Dorsolateral prefrontal cortex (tissue), 120 donors: ENCODE measurements at regions of chr6 and their contacts with region 1.

Region 1: DNA sequence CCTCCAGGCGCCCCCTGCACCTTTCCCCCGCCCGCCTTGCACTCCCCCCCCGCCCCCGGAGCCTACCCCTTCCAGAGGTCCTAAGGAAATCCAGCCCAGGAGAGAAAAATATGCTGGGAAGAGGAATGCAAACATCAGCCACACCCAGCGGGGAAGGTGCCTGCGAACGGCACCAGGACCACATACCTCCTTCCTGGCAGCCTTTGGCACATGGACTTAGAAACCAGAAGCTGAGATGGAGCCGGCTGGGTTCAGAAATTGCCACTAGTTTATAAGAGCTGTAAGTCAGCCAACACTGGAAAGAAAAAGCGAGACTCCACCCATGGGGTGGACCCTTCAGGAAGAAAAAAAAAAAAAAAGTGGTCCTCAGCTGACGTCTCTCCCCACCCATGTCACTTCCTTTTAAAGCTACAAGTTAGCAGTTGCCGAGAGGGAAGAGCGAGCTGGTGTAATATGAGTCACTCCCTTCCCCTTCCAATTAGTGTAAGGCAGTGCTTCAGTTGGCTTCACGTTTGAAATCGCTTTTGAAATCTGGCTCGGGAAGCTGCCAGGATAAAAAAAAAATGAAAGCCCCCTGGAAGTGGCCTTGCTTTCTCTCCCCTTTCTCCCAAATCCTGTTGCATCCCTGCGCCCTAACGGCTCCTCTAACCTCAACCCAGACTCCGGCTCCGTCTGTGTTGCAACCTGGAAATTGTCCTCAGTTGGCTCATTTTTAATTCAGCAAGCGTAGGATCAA is at the start of gene AGPAT4:
- DNase-seq: peak in 8 of 10 donors; percentile 45 to 79 (median 54)
- H3K4me3 ChIP-seq: peak within 1 kb of the TSS; percentile 60 to 90 (median 75)
- H3K27ac ChIP-seq: peak within 1 kb of the TSS; percentile 39 to 93 (median 87)
- H3K27me3 ChIP-seq: no peaks in the 10 kb centered on the region
- CTCF ChIP-seq: peak in 5 of 56 donors; percentile 4 to 22 (median 7)
- total RNA-seq, gene AGPAT4: 34.6 to 138 (median 62.5) TPM

Region 2: DNA sequence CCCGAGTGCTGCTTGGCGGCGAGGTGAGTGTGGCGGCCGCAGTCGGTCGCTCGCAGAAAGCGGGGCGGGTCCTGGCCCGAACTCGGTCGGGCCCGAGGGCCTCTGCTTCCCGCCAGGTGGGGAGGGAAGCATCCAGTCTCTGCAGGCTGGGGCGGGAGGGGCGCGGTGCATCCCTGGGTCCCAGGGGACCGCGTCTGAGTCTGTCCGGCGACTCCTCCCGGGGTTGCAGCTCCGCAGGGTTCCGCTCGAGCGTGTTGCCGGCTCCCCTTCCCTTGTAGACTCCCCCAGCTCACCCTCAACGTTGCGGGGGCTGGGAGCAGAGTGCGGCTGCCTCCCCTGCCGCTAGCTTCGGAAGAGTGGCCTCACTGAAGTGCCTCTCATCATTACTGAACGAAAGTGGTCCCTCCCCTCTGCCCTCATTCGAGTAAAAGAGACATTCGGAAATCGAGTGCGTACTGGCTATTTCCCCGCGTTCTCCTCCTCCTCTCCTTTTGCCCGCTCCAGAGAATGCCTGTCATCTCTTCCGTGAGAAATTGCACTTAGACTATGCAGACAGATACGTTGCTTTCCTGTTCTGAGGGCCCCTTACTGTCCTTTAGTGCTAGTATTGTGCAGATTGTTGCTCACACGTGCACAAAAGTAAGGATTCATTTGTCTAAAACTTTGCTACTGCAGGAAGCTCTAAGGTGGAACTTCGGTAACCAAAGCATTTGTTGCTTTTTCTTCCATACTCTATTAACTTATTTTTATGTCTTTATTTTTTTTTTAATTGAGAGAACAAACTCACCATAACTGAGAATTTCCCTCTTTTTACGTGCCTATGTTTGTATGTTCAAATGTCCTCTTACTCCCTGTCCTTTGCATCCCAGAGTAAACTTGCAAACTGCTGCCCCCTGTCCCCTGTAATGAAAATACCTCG is 281.6 kb before region 1 on chr6:
- intact Hi-C with region 1: loop called in 1 of 2 experiments (anchors 10 kb)
- DNase-seq: peak in 9 of 10 donors; percentile 29 to 61 (median 46)
- H3K4me3 ChIP-seq: peak overlapping the region; percentile 57 to 98 (median 92)
- H3K27ac ChIP-seq: peak overlapping the region; percentile 73 to 98 (median 93)
- H3K27me3 ChIP-seq: no peaks in the 10 kb centered on the region
- CTCF ChIP-seq: peak in 54 of 56 donors; percentile 26 to 72 (median 56)

Region 3: DNA sequence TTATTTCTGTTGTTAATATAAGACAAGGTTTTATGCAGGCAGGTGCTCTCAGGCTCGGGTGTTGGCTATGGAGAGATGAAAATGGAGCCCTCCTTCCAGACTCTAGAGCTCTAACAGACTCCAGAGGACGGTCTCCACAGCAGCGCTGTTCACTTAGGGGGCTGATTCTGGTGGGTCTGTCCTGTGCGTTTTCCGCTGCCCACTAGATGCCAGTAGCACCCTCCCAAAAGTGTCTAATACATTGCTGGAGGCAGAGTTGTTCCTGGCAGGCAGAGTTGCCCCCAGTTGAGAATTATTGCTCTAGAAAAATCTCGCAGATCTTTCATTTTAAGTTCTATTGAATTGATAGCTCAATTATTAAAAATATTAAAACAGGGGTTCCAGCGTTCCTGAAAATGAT is 172.4 kb before region 1 on chr6:
- intact Hi-C with region 1: loop called in 1 of 2 experiments (anchors 10 kb)
- DNase-seq: peak in 2 of 10 donors; percentile 18 to 50
- H3K4me3 ChIP-seq: no peak overlapping the region
- H3K27ac ChIP-seq: peak overlapping the region in 9 of 59 donors; percentile 3 to 31 (median 11)
- H3K27me3 ChIP-seq: no peaks in the 10 kb centered on the region
- CTCF ChIP-seq: peak in 53 of 56 donors; percentile 10 to 71 (median 49)

Region 4: DNA sequence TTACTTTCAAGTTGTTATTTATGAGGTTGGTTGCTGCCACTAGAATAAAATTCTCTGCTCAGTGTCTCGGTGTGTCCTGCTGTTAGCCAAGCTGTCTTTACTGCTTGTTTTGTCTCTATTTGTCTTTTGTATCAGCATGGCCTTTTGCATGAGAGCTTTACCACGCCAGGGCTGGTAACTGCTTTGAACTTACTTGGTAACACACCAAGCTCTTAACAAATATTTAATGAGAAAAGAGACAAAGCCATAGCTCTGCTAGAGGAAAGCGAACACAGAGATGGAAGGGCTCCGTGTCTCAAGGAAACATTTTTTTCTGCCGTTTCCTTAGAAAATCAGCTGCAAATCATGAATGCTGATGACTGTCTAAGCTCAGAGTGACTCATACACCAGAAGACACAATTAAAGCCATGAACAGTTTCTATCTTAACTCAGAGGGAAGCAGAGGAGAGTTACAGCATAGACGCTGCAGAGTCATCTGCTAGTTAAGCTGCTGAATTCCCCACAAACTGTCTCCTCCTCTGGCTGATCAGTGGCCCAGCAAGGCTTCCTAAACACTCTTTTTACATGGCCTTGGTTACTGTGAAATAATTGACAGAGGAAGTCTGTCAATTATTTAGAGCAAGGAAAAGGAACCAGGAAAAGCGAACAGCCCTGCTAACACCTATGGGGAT is 44.9 kb before region 1 on chr6:
- intact Hi-C with region 1: loop called (anchors 5 kb)
- DNase-seq: peak in 1 of 10 donors; percentile 47
- H3K4me3 ChIP-seq: peak overlapping the region in 50 of 59 donors; percentile 3 to 53 (median 21)
- H3K27ac ChIP-seq: peak overlapping the region; percentile 22 to 93 (median 85)
- H3K27me3 ChIP-seq: no peaks in the 10 kb centered on the region
- CTCF ChIP-seq: peak in 3 of 56 donors; percentile 9 to 13 (median 11)

Region 5: GRCh38 chr6:161292145-161292544 is 18.2 kb after region 1 on chr6:
- intact Hi-C with region 1: no loop called
- DNase-seq: no peak
- H3K4me3 ChIP-seq: no peak overlapping the region
- H3K27ac ChIP-seq: no peak overlapping the region
- H3K27me3 ChIP-seq: no peaks in the 10 kb centered on the region
- CTCF ChIP-seq: no peak

Region 6: DNA sequence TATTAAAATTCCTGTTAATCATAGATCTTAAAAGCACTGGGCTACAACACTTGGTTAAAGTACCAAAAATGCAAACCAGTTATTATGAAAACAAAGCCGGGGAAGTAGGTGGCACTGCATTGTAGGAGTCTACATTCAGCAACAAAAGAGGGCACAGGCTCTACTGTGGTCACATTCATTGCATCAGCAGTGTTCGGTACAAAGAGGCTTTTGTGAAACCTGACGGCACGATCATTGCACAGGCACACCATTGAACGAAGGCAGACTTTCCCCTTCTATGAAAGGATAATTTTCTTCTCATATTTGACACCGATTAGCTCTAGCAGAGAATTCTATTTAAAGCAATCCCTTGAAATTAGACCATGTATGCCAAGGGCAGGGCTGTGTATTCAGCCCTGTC is 44.5 kb after region 1 on chr6:
- intact Hi-C with region 1: loop called (anchors 2 to 5 kb)
- DNase-seq: peak in 9 of 10 donors; percentile 35 to 87 (median 60)
- H3K4me3 ChIP-seq: peak overlapping the region in 39 of 59 donors; percentile 2 to 53 (median 26)
- H3K27ac ChIP-seq: peak overlapping the region; percentile 40 to 99 (median 94)
- H3K27me3 ChIP-seq: no peaks in the 10 kb centered on the region
- CTCF ChIP-seq: peak in 21 of 56 donors; percentile 4 to 51 (median 25)

Region 7: GRCh38 chr6:161333410-161333809 is 59.5 kb after region 1 on chr6:
- intact Hi-C with region 1: no loop called
- DNase-seq: no peak
- H3K4me3 ChIP-seq: no peak overlapping the region
- H3K27ac ChIP-seq: no peak overlapping the region
- H3K27me3 ChIP-seq: no peaks in the 10 kb centered on the region
- CTCF ChIP-seq: no peak

Region 8: GRCh38 chr6:161486361-161487216 is 212.7 kb after region 1 on chr6:
- intact Hi-C with region 1: no loop called
- DNase-seq: no peak
- H3K4me3 ChIP-seq: no peak overlapping the region
- H3K27ac ChIP-seq: no peak overlapping the region
- H3K27me3 ChIP-seq: no peaks in the 10 kb centered on the region
- CTCF ChIP-seq: no peak